PC-9 (cell line): ENCODE measurements at regions of chr17 and their contacts with region 1.

Region 1: GRCh38 chr17:10844621-10845387 is 6.9 kb upstream of the PIRT start:
- DNase-seq: peak in 1 of 2 experiments; percentile 38
- H3K4me3 ChIP-seq: no peak overlapping the region
- H3K27ac ChIP-seq: no peak overlapping the region
- H3K4me1 ChIP-seq: no peaks in the 10 kb centered on the region
- H3K27me3 ChIP-seq: 0 out of 2 replicates have a peak, but pooled peaks cover 2% of the 10 kb centered on the region
- CTCF ChIP-seq: peak; percentile 81

Region 2: GRCh38 chr17:10631048-10631700 is 213.6 kb before region 1 on chr17:
- CTCF ChIA-PET with region 1: no interaction called
- POLR2A ChIA-PET with region 1: no interaction called
- intact Hi-C with region 1: loop called (anchors 5 kb)
- DNase-seq: peak in 1 of 2 experiments; percentile 49
- H3K4me3 ChIP-seq: no peak overlapping the region
- H3K27ac ChIP-seq: no peak overlapping the region
- H3K4me1 ChIP-seq: no peaks in the 10 kb centered on the region
- H3K27me3 ChIP-seq: peaks cover 35% of the 10 kb centered on the region
- CTCF ChIP-seq: peak; percentile 71

Region 3: GRCh38 chr17:10646392-10646990 is 198.3 kb before region 1 on chr17:
- CTCF ChIA-PET with region 1: interaction called, 3 read pairs
- POLR2A ChIA-PET with region 1: no interaction called
- intact Hi-C with region 1: loop called (anchors 1 kb)
- DNase-seq: peak in 1 of 2 experiments; percentile 58
- H3K4me3 ChIP-seq: no peak overlapping the region
- H3K27ac ChIP-seq: no peak overlapping the region
- H3K4me1 ChIP-seq: no peaks in the 10 kb centered on the region
- H3K27me3 ChIP-seq: peaks cover 58% of the 10 kb centered on the region
- CTCF ChIP-seq: peak; percentile 79

Region 4: DNA sequence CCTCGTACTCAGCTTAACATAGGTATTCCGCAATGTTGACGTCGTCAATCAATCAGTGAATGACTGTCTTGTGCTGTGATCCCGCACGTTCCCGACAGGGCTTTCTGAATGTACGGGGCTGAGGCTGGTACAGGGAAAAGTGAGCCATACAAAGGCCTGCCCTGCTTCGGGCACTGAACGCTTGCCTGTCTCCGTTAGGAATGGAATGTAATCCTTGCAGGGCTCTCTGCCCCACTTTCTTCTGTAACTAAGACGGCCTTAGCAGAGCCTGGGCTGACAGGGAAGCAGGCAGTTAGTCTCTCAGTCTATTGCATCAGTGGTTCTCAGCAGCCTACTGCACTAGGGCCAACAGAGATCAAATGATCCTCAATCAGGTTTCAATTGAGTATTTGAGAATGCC is 171.5 kb before region 1 on chr17:
- CTCF ChIA-PET with region 1: no interaction called
- POLR2A ChIA-PET with region 1: no interaction called
- intact Hi-C with region 1: no loop called
- DNase-seq: no peak
- H3K4me3 ChIP-seq: no peak overlapping the region
- H3K27ac ChIP-seq: no peak overlapping the region
- H3K4me1 ChIP-seq: no peaks in the 10 kb centered on the region
- H3K27me3 ChIP-seq: no peaks in the 10 kb centered on the region
- CTCF ChIP-seq: no peak

Region 5: DNA sequence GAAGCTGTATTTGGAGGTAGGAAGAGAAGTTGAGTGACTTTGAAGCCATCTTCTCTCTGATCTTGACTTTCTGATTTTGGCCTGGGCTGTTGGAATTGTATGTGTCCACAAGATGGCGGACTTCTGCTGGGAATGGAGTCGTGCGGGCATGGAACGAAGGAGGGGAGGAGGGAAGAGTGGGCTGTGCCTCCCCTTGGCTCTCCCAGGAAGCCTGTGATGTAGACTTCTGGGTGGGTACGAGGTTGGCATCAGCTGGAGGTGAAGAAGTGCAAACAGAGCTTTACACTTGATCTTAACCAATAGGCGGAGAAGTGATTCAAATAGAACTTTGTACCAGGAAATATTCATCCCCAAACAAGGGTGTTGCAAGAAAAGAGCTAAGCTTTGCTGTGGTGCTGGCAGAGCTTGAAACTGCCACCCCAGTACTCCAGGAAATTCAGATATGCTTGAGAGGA is 107.6 kb before region 1 on chr17:
- CTCF ChIA-PET with region 1: interaction called, 3 read pairs
- POLR2A ChIA-PET with region 1: no interaction called
- intact Hi-C with region 1: loop called (anchors 1 kb)
- DNase-seq: peak; percentile 47 to 53
- H3K4me3 ChIP-seq: no peak overlapping the region
- H3K27ac ChIP-seq: no peak overlapping the region
- H3K4me1 ChIP-seq: no peaks in the 10 kb centered on the region
- H3K27me3 ChIP-seq: peaks cover 49% of the 10 kb centered on the region
- CTCF ChIP-seq: peak; percentile 66

Region 6: DNA sequence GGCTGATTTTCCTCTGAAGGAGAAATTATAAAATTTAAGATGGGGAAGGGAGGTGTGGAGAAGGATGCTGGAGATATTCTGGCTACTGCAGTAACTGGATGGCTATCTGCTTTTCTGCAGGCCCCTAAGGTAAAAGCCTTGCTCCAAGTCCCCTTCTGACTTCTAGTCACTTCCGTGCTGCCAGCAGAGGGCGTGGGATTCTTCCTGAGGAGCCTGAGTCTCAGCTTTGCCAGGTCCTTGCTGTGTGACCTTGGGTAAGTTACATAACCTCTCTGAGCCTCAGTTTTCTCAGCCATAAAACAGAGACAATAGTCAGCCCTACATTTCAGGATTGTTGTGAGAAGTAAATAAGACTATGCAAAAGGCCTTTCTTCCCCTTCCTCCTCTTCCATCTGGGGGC is 90.7 kb before region 1 on chr17:
- CTCF ChIA-PET with region 1: no interaction called
- POLR2A ChIA-PET with region 1: no interaction called
- intact Hi-C with region 1: loop called (anchors 5 kb)
- DNase-seq: peak in 1 of 2 experiments; percentile 17
- H3K4me3 ChIP-seq: no peak overlapping the region
- H3K27ac ChIP-seq: no peak overlapping the region
- H3K4me1 ChIP-seq: no peaks in the 10 kb centered on the region
- H3K27me3 ChIP-seq: peaks cover 48% of the 10 kb centered on the region
- CTCF ChIP-seq: peak; percentile 37

Region 7: DNA sequence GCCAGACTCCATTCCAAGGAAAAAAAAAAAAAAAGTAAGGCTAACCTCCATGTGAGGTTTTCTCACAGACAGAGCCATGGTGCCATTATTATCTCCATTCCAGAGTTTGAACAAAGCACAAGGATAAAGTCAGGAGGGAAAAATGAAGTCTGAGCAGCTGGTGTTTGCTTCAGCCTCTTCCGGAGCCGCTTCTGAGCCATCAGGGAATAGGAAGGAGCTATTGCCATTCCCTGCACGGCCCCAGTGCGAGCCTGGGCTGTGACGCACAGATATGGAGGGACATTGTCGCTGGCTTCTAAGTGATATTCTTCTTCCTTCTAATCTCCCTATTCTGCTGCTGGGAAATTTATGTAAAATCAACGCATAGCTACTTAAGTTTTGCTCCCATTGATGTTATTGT is 62.6 kb after region 1 on chr17:
- CTCF ChIA-PET with region 1: no interaction called
- POLR2A ChIA-PET with region 1: no interaction called
- intact Hi-C with region 1: no loop called
- DNase-seq: no peak
- H3K4me3 ChIP-seq: no peak overlapping the region
- H3K27ac ChIP-seq: no peak overlapping the region
- H3K4me1 ChIP-seq: no peaks in the 10 kb centered on the region
- H3K27me3 ChIP-seq: peaks cover 4% of the 10 kb centered on the region; the same call in 1 of the 2 replicates
- CTCF ChIP-seq: no peak

Region 8: DNA sequence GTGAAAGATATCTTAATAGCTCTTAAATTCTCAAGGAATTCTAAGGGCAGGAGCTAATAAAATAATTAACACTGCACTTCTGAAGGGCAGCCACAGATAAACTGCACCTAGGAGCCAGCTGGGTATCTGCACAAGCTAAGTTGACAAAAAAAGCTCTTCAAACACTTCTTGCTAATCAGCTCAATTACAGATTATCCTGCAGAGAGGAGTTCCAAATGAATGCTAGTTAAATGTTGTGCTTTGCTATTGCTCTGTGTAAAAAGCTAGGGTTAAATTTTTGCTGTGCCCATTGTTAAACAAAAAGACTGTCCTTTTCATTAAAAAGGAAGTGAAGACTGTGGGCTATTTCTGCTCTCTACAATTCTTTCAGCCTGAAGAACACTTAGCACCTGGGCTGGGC is 237.8 kb after region 1 on chr17:
- CTCF ChIA-PET with region 1: no interaction called
- POLR2A ChIA-PET with region 1: no interaction called
- intact Hi-C with region 1: no loop called
- DNase-seq: no peak
- H3K4me3 ChIP-seq: no peak overlapping the region
- H3K27ac ChIP-seq: no peak overlapping the region
- H3K4me1 ChIP-seq: no peaks in the 10 kb centered on the region
- H3K27me3 ChIP-seq: 0 out of 2 replicates have a peak, but pooled peaks cover 5% of the 10 kb centered on the region
- CTCF ChIP-seq: no peak